Brain microvascular endothelial cell (primary cell): ENCODE measurements at regions of chr1 and their contacts with region 1.

Region 1: GRCh38 chr1:202009326-202010179 is 834 bp upstream of the ELF3 start:
- DNase-seq: peak; percentile 75
- H3K4me3 ChIP-seq: no peak overlapping the region
- H3K27ac ChIP-seq: no peak overlapping the region
- H3K27me3 ChIP-seq: no peaks in the 10 kb centered on the region
- CTCF ChIP-seq: peak; percentile 89

Region 2: DNA sequence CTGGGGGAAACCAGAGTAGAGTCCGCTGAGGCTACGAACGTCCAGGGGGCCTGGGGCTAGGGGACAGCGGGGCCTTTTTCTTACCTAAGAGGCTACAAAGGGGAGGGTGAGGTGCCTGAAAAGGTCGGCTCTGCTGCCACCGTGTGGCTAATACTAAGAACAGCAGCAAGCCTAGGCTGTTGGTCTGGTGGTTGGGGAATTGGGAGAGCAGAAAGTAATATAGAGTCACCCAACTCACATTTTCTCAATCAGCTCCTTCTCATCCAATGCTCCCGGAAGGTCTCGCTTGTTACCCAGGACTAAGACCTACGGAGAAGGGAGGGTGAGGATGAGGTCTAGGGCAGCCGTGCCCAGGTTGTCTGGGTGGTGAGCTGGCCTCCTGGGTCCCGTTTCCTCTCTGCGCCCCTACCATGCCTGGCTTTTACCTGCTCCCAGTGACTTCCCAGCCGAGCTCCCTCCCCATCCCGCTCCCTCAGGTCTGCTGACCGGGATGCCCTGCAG is 125.7 kb after region 1 on chr1:
- in situ Hi-C with region 1: loop called (anchors 25 kb)
- DNase-seq: peak; percentile 42
- H3K4me3 ChIP-seq: no peak overlapping the region
- H3K27ac ChIP-seq: no peak overlapping the region
- H3K27me3 ChIP-seq: no peaks in the 10 kb centered on the region
- CTCF ChIP-seq: peak; percentile 91

Region 3: GRCh38 chr1:202291961-202292712 is 282.6 kb after region 1 on chr1:
- in situ Hi-C with region 1: no loop called
- DNase-seq: peak; percentile 80
- H3K4me3 ChIP-seq: no peak overlapping the region
- H3K27ac ChIP-seq: no peak overlapping the region
- H3K27me3 ChIP-seq: no peaks in the 10 kb centered on the region
- CTCF ChIP-seq: no peak